ENCODE measurements at regions of chr10 and their contacts with region 1.

Region 1: DNA sequence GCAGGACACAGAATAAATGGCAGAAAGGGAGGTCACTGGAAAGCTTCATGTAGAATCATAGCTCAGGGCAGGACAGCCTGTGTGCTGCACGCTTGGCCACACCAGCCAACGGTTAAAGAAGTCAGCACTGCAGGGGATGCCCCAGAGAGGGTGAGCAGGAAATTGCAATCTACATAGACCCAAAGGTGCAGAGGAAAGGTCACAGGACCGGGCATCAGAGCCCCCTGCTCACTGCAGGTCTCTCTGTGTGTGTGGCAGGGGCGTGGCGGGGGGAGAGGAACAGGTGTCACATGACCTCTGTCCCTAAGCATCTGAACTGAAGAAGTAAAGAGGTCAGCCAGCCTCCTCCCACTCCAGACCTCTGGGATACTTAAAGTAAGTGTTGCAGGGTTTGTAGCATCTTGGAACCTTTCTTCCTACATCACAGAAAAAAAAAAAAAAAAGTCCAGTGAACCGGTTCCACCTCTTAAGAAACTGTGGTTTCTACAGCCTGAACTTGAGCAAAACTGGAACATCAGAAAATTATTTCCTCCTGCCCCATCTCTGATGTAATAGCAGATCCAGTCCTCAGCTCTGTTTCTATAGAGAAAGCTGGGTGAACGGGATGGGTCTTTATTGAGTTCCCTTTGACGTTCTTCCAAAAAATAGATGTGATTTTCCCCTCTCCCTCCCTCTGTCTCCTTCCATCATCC is 64.3 kb downstream of the RGS10 start:
- DNase-seq: peak; percentile 72
- ATAC-seq: peak; percentile 93
- H3K4me3 Mint-ChIP-seq: peak overlapping the region; percentile 14
- H3K27ac Mint-ChIP-seq: peak overlapping the region; percentile 38
- H3K4me1 Mint-ChIP-seq: peaks cover 28% of the 10 kb centered on the region
- H3K27me3 Mint-ChIP-seq: no peaks in the 10 kb centered on the region

Region 2: GRCh38 chr10:119489991-119490326 is 11.7 kb after region 1 on chr10:
- CTCF ChIA-PET with region 1: interaction called, 11 read pairs
- POLR2A ChIA-PET with region 1: no interaction called
- intact Hi-C with region 1: no loop called
- DNase-seq: no peak
- ATAC-seq: no peak
- H3K4me3 Mint-ChIP-seq: peak overlapping the region; percentile 67
- H3K27ac Mint-ChIP-seq: peak overlapping the region; percentile 92
- H3K4me1 Mint-ChIP-seq: peaks cover 43% of the 10 kb centered on the region
- H3K27me3 Mint-ChIP-seq: no peaks in the 10 kb centered on the region